ENCODE measurements at regions of chr19 and their contacts with region 1.

Region 1: GRCh38 chr19:3762501-3763459 is at the start of gene MRPL54:
- DNase-seq: peak; percentile 100
- ATAC-seq: peak; percentile 86
- H3K4me3 Mint-ChIP-seq: peak within 1 kb of the TSS; percentile 96
- H3K27ac Mint-ChIP-seq: peak within 1 kb of the TSS; percentile 100
- H3K4me1 Mint-ChIP-seq: peaks cover 47% of the 10 kb centered on the region
- H3K27me3 Mint-ChIP-seq: no peaks in the 10 kb centered on the region
- total RNA-seq, gene MRPL54: 66.9 to 71.4 TPM

Region 2: GRCh38 chr19:3783660-3784584 is 21.1 kb after region 1 on chr19:
- CTCF ChIA-PET with region 1: interaction called, 10 read pairs
- POLR2A ChIA-PET with region 1: interaction called, 6 read pairs
- DNase-seq: peak; percentile 44
- ATAC-seq: no peak
- H3K4me3 Mint-ChIP-seq: peak overlapping the region; percentile 8
- H3K27ac Mint-ChIP-seq: no peak overlapping the region
- H3K4me1 Mint-ChIP-seq: peaks cover 28% of the 10 kb centered on the region
- H3K27me3 Mint-ChIP-seq: no peaks in the 10 kb centered on the region

Region 3: DNA sequence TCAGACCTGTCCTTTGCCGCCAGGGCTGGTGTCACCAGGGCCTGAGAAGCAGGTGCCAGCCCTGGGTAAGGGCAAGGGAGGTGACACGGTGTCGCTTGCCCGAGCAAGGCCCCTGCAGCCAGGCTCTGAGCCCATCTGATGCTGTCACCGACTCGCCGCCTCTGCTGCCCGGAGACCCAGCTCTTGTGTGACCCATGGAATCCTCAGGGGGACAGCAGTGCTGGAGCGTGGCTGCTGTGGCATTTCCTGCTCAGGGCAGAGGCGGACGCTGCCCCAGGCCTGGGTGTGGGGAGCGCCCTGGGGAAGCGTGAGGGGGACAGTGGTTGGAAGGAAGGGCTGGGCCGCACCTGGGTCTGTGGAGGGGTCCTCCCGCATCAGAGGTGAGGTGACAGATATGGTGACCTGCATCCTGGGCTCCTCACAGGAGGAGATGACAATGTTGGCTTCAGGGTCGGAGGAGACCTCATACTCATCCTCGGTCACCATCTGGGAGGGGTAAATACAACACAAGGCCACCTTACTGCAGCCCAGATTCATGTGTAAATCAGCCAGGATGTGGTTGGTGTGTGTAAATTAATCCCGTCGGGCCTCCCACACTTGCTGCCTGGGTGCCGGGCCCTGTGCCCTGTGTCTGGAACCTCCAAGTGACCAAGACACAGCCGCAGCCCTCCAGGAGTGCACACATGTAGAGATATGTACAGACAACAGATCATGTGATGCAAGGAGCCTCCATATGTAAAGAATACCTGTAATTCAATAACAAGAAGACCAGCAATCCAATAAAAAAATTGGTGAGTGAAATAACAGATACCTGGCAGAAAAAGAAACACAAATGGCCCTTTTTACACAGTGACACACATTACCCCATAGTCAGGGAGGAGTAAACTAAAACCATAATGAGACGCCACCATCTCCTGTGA is 51.0 kb after region 1 on chr19:
- CTCF ChIA-PET with region 1: interaction called, 21 read pairs
- POLR2A ChIA-PET with region 1: interaction called, 8 read pairs
- DNase-seq: no peak
- ATAC-seq: no peak
- H3K4me3 Mint-ChIP-seq: peak overlapping the region; percentile 31
- H3K27ac Mint-ChIP-seq: peak overlapping the region; percentile 98
- H3K4me1 Mint-ChIP-seq: peaks cover 62% of the 10 kb centered on the region
- H3K27me3 Mint-ChIP-seq: no peaks in the 10 kb centered on the region

Region 4: DNA sequence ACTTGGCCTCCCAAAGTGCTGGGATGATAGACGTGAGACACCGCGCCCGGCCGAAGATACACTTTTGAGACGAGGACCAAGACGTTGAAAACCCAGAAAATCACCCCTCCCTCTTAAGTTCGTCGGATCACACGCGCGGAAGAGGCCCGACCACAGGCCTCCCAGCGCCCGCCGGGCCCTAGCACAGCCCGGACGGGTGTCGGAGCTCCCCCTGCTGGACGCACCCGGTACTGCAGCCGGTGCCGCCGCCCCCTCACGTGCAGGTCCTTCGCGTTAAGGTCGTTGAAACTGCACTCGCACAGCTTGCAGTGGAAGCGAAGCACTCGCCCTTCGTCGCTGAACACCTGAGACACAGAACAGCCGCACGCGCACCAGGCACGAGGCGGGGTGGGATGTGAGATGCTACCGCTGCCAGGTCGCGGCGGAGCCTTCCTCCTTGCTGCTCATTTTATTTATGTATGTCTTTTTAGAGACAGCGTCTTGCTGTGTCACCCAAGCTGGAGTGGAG is 59.1 kb after region 1 on chr19:
- CTCF ChIA-PET with region 1: interaction called, 40 read pairs
- POLR2A ChIA-PET with region 1: interaction called, 6 read pairs
- DNase-seq: peak; percentile 93
- ATAC-seq: peak; percentile 95
- H3K4me3 Mint-ChIP-seq: no peak overlapping the region
- H3K27ac Mint-ChIP-seq: peak overlapping the region; percentile 76
- H3K4me1 Mint-ChIP-seq: peaks cover 33% of the 10 kb centered on the region
- H3K27me3 Mint-ChIP-seq: no peaks in the 10 kb centered on the region

Region 5: DNA sequence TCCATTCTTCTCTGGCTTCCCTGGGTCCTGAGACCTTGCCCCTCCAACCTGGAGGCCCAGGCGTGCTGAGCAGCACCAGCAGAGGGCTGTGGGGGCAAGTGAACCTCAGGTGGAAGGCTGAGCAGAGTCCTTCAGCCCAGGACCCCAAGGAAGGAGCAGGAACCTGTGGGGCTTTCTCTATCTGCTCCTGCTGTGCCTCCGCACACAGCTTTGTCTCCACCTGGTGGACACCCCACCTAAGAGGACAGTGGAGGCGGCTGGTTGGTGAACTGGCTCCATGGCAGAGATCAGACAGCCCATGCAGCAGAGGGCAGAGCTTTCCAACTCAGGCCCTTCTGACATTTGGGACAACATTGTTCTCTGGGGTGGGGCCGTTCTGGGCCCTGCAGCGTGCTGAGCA is 86.3 kb after region 1 on chr19:
- CTCF ChIA-PET with region 1: interaction called, 12 read pairs
- POLR2A ChIA-PET with region 1: no interaction called
- DNase-seq: peak; percentile 71
- ATAC-seq: peak; percentile 84
- H3K4me3 Mint-ChIP-seq: no peak overlapping the region
- H3K27ac Mint-ChIP-seq: no peak overlapping the region
- H3K4me1 Mint-ChIP-seq: no peaks in the 10 kb centered on the region
- H3K27me3 Mint-ChIP-seq: no peaks in the 10 kb centered on the region

Measured in activated CD8-positive, alpha-beta T cell treated with anti-CD3 and anti-CD28 coated beads, Interleukin-2, amount 10 ng/mL, durations not matched to agents 7 days and 5 days (primary cell).